Activated naive CD4-positive, alpha-beta T cell treated with anti-CD3 and anti-CD28 coated beads, Interleukin-2, amount 10 ng/mL, durations not matched to agents 7 days and 5 days (primary cell): ENCODE measurements at regions of chr6 and their contacts with region 1.

Region 1: GRCh38 chr6:73129653-73130443 is 95.4 kb downstream of the KHDC1L start:
- DNase-seq: peak; percentile 89
- H3K4me3 Mint-ChIP-seq: peak overlapping the region; percentile 24
- H3K27ac Mint-ChIP-seq: no peak overlapping the region
- H3K4me1 Mint-ChIP-seq: peaks cover 4% of the 10 kb centered on the region
- H3K27me3 Mint-ChIP-seq: peaks cover 5% of the 10 kb centered on the region

Region 2: GRCh38 chr6:72619883-72620696 is 509.8 kb before region 1 on chr6:
- CTCF ChIA-PET with region 1: interaction called, 173 read pairs
- DNase-seq: peak; percentile 71
- H3K4me3 Mint-ChIP-seq: peak overlapping the region; percentile 94
- H3K27ac Mint-ChIP-seq: peak overlapping the region; percentile 97
- H3K4me1 Mint-ChIP-seq: peaks cover 57% of the 10 kb centered on the region
- H3K27me3 Mint-ChIP-seq: peaks cover 7% of the 10 kb centered on the region

Region 3: GRCh38 chr6:73394577-73395354 is 264.9 kb after region 1 on chr6 and contains the start of gene DDX43:
- CTCF ChIA-PET with region 1: no interaction called
- DNase-seq: peak; percentile 39
- H3K4me3 Mint-ChIP-seq: peak within 1 kb of the TSS; percentile 28
- H3K27ac Mint-ChIP-seq: peak within 1 kb of the TSS; percentile 80
- H3K4me1 Mint-ChIP-seq: peaks cover 21% of the 10 kb centered on the region
- H3K27me3 Mint-ChIP-seq: peaks cover 7% of the 10 kb centered on the region